Psoas muscle (tissue), 8 donors: ENCODE measurements at regions of chr15 and their contacts with region 1.

Region 1: GRCh38 chr15:85582131-85583079 is 202.0 kb downstream of the AKAP13 start:
- DNase-seq: peak; percentile 43 to 73
- ATAC-seq: peak; percentile 65 to 71 (median 68)
- H3K4me3 ChIP-seq: peak overlapping the region; percentile 69
- H3K27ac ChIP-seq: peak overlapping the region; percentile 94
- H3K4me1 ChIP-seq: peaks cover 69% of the 10 kb centered on the region
- H3K27me3 ChIP-seq: no peaks in the 10 kb centered on the region
- CTCF ChIP-seq: no peak

Region 2: GRCh38 chr15:85125056-85125661 is 457.2 kb before region 1 on chr15:
- intact Hi-C with region 1: no loop called
- DNase-seq: no peak
- ATAC-seq: no peak
- H3K4me3 ChIP-seq: no peak overlapping the region
- H3K27ac ChIP-seq: no peak overlapping the region
- H3K4me1 ChIP-seq: no peaks in the 10 kb centered on the region
- H3K27me3 ChIP-seq: no peaks in the 10 kb centered on the region
- CTCF ChIP-seq: no peak

Region 3: DNA sequence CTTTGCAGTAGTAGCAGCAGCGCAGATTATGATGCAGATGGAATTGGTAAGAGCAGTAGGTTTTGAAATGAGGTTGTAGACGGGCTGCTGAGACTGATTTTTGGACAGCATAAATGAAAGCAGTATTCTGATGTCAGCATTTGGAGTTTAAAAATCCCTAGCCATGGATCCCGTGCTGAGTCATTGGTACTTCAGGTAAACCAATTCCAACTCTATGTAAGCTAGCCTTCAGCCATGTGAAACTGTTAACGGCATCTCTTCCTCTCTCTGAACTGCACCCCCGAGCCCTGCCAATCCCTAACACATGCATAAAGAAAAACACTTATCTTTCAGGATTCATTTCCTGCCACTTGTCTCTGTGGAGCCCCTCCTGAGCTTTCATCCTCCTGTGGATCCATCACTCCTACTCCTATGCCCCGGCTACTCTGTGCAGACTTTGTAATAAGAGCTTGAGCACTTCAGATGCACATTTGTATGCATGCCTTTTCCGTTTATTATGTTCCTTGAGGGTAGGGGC is 83.0 kb before region 1 on chr15:
- intact Hi-C with region 1: loop called in 1 of 2 experiments (anchors 5 kb)
- DNase-seq: no peak
- ATAC-seq: peak in 2 of 4 donors; percentile 30 to 47
- H3K4me3 ChIP-seq: no peak overlapping the region
- H3K27ac ChIP-seq: no peak overlapping the region
- H3K4me1 ChIP-seq: peaks cover 38% of the 10 kb centered on the region
- H3K27me3 ChIP-seq: no peaks in the 10 kb centered on the region
- CTCF ChIP-seq: no peak

Region 4: GRCh38 chr15:85624291-85624801 is 41.9 kb after region 1 on chr15:
- intact Hi-C with region 1: loop called (anchors 2 to 5 kb)
- DNase-seq: no peak
- ATAC-seq: peak in 2 of 4 donors; percentile 8
- H3K4me3 ChIP-seq: peak overlapping the region; percentile 24
- H3K27ac ChIP-seq: peak overlapping the region; percentile 87
- H3K4me1 ChIP-seq: peaks cover 72% of the 10 kb centered on the region
- H3K27me3 ChIP-seq: no peaks in the 10 kb centered on the region
- CTCF ChIP-seq: no peak